ENCODE measurements at regions of chr7 and their contacts with region 1.

Region 1: DNA sequence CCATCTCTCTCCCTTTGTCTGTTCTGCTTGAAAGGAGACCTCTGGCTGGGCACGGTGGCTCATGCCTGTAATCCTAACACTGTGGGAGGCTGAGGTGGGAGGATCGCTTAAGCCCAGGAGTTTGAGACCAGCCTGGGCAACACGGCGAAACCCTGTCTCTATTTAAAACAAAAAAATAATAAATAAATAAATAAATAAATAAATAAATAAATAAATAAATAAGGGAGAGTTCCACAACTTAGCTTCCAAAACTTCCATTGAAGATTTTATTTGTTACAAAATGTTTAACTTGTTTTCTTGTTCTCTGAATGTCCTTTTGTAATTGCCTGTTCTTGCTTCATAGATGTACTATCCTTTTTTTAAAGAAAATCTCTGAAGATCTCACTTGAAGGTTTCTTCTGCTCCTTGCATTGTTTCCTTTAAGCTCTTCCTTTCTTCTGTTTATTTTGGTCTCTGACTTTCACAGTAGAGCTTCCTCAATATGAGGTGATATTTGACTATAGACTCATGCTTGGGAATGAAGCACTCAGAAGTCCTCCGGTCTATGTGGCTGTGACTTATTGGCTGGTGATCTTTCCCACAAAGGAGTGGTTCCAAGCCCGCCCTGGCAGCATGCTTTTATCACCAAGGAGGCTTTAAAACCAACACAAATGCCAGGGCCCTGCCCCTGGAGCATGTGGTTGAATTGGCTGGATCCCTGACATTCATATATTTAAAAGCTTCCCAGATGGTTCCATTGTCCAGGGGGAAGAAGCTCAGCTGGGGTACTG is 18.1 kb upstream of the NPTX2 start:
- DNase-seq: peak; percentile 57
- H3K4me3 ChIP-seq: no peak overlapping the region
- H3K27ac ChIP-seq: no peak overlapping the region
- H3K4me1 ChIP-seq: peaks cover 0 to 4% (median 0%) of the 10 kb centered on the region in 4 donors
- H3K27me3 ChIP-seq: no peaks in the 10 kb centered on the region
- CTCF ChIP-seq: no peak
- EP300 ChIP-seq: no peak
- POLR2A ChIP-seq: no peak

Region 2: DNA sequence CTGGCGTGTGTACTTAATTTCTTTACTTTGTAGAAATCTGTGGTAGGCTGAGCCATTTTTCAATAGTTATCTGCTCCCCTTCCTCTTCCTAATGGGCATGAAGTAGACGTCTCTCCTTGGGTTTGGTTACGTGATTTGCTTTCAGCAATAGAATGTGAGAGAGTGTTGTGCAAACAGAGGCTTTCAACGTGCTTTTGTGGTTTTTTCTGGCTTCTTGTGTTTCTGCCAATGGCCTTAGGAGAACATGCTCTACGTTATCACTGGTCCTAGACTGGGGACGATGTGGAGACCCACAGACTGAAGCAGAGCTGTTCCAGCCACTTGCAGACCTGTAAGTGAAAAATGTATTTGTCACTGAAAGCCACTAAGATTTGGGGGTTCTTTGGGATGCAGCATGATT is 89.2 kb before region 1 on chr7:
- in situ Hi-C with region 1: no loop called
- intact Hi-C with region 1: no loop called
- DNase-seq: no peak
- H3K4me3 ChIP-seq: no peak overlapping the region
- H3K27ac ChIP-seq: no peak overlapping the region
- H3K4me1 ChIP-seq: no peaks in the 10 kb centered on the region
- H3K27me3 ChIP-seq: peaks cover 4% of the 10 kb centered on the region
- CTCF ChIP-seq: no peak
- EP300 ChIP-seq: no peak
- POLR2A ChIP-seq: no peak

Region 3: GRCh38 chr7:98659756-98660155 is 60.7 kb after region 1 on chr7:
- in situ Hi-C with region 1: no loop called
- intact Hi-C with region 1: loop called (anchors 2 kb)
- DNase-seq: no peak
- H3K4me3 ChIP-seq: no peak overlapping the region
- H3K27ac ChIP-seq: no peak overlapping the region
- H3K4me1 ChIP-seq: no peaks in the 10 kb centered on the region
- H3K27me3 ChIP-seq: no peaks in the 10 kb centered on the region
- CTCF ChIP-seq: no peak
- EP300 ChIP-seq: no peak
- POLR2A ChIP-seq: no peak

Measured in transverse colon (tissue), 4 donors.